ENCODE measurements at regions of chr5 and their contacts with region 1.

Region 1: GRCh38 chr5:138077065-138077696 is 6.7 kb upstream of the WNT8A start:
- DNase-seq: no peak
- H3K4me3 ChIP-seq: no peak overlapping the region
- H3K27me3 ChIP-seq: peaks cover 2% of the 10 kb centered on the region; the same call in 1 of the 2 replicates
- CTCF ChIP-seq: peak; percentile 82

Region 2: DNA sequence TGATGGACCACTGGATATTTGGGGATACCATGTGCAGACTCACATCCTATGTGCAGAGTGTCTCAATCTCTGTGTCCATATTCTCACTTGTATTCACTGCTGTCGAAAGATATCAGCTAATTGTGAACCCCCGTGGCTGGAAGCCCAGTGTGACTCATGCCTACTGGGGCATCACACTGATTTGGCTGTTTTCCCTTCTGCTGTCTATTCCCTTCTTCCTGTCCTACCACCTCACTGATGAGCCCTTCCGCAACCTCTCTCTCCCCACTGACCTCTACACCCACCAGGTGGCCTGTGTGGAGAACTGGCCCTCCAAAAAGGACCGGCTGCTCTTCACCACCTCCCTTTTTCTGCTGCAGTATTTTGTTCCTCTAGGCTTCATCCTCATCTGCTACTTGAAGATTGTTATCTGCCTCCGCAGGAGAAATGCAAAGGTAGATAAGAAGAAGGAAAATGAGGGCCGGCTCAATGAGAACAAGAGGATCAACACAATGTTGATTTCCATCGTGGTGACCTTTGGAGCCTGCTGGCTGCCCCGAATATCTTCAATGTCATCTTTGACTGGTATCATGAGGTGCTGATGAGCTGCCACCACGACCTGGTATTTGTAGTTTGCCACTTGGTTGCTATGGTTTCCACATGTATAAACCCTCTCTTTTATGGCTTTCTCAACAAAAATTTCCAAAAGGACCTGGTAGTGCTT is 268.5 kb before region 1 on chr5:
- CTCF ChIA-PET with region 1: no interaction called
- POLR2A ChIA-PET with region 1: no interaction called
- DNase-seq: no peak
- H3K4me3 ChIP-seq: no peak overlapping the region
- H3K27me3 ChIP-seq: no peaks in the 10 kb centered on the region
- CTCF ChIP-seq: no peak

Region 3: DNA sequence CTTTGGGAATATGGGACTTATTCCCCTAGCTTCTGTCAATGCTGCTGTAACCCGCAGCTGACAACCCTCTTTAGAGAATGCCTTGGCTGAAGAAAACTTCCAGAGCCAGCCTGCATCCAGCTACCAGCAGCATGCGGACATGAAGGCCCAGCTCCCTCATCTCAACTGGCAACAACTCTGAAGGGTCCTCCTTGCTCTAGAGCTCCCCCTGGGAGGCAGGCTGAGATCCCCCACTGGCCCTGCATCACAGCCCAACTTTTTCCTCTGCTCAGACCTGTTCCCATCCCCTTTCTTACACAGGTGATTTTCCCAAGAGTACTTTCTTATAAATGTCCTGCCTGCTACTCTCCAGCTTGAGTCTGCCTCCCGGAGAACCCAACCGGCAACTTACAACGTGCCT is 12.1 kb before region 1 on chr5:
- CTCF ChIA-PET with region 1: interaction called, 20 read pairs
- POLR2A ChIA-PET with region 1: no interaction called
- DNase-seq: no peak
- H3K4me3 ChIP-seq: no peak overlapping the region
- H3K27me3 ChIP-seq: no peaks in the 10 kb centered on the region; the same call in 1 of the 2 replicates
- CTCF ChIP-seq: peak; percentile 36; the same call in 1 of the 2 replicates

Region 4: GRCh38 chr5:138095100-138095907 is 18.1 kb after region 1 on chr5:
- CTCF ChIA-PET with region 1: interaction called, 25 read pairs
- POLR2A ChIA-PET with region 1: no interaction called
- DNase-seq: no peak
- H3K4me3 ChIP-seq: no peak overlapping the region
- H3K27me3 ChIP-seq: peaks cover 10% of the 10 kb centered on the region
- CTCF ChIP-seq: no peak

Region 5: GRCh38 chr5:138110266-138110963 is 33.2 kb after region 1 on chr5:
- CTCF ChIA-PET with region 1: interaction called, 16 read pairs
- POLR2A ChIA-PET with region 1: no interaction called
- DNase-seq: no peak
- H3K4me3 ChIP-seq: no peak overlapping the region
- H3K27me3 ChIP-seq: no peaks in the 10 kb centered on the region
- CTCF ChIP-seq: no peak

Region 6: DNA sequence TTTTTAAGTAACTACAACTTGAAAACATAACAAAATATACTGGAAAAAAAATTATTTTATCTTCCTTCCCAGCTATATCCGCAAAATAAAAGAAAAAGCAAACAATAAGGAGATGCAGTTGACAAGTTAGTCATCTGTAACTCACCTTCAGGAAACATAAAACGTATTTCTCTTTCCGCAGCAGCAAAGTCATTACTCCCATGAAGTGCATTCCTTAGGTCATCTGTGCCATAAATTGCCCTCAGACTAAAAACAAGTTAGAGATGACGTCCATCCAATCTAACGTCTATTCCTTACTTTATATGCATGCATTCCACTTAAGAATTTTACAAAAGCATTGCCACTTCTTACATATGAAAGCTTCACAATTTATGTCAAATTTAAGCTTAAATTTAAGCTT is 51.2 kb after region 1 on chr5:
- CTCF ChIA-PET with region 1: interaction called, 51 read pairs
- POLR2A ChIA-PET with region 1: no interaction called
- DNase-seq: no peak
- H3K4me3 ChIP-seq: no peak overlapping the region
- H3K27me3 ChIP-seq: no peaks in the 10 kb centered on the region
- CTCF ChIP-seq: no peak

Measured in BJ (cell line).